ENCODE measurements at regions of chr20 and their contacts with region 1.

Region 1: GRCh38 chr20:2991532-2991931 is 51.9 kb upstream of the GNRH2 start:
- DNase-seq: no peak
- H3K4me3 ChIP-seq: no peak overlapping the region
- H3K27ac ChIP-seq: no peak overlapping the region
- H3K4me1 ChIP-seq: peaks cover 9% of the 10 kb centered on the region
- H3K27me3 ChIP-seq: no peaks in the 10 kb centered on the region
- CTCF ChIP-seq: no peak

Region 2: GRCh38 chr20:2742934-2743559 is 248.5 kb before region 1 on chr20:
- CTCF ChIA-PET with region 1: no interaction called
- POLR2A ChIA-PET with region 1: no interaction called
- intact Hi-C with region 1: loop called (anchors 10 kb)
- DNase-seq: peak; percentile 82
- H3K4me3 ChIP-seq: no peak overlapping the region
- H3K27ac ChIP-seq: no peak overlapping the region
- H3K4me1 ChIP-seq: no peaks in the 10 kb centered on the region
- H3K27me3 ChIP-seq: peaks cover 2% of the 10 kb centered on the region
- CTCF ChIP-seq: peak; percentile 98

Region 3: DNA sequence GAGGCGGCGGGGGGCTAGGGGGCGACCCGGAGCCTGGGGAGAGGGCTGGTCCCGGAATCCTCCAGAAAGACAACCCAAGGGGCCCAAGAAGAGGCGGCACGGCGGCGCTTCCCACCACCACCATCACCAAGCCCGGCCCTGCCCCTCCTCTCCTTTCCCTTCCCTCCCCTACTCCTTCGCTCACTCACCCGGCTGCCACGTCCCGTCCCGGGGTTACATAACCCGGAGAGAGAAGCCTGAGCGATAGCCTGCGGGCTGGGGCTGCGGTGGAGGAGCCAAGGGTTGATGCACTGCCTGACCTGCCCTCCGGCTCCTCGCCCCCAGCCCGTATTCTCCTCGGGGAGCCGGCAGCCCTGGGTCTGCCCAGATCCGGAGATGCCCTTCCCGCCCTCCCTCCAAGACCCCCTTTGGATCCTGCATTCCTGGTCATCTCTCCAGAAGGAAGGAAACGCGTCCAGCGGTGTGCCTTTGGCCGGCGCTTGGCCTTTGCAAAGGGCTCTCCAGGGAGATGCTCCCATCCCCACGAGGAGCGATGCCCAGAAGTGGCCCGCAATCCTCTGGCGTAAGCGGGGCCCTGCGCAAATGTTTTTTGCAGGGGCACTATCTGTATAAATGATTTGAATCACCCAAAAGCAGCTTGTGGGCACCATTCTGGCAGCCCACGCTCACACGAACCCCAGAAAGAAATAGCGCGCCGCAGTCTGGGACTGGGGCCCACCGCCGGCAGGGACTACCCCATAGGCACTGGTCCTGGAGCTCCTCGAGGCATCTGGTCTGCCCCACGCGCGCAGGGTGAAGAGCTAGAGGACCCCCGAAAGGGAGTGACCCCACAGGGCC is 186.5 kb before region 1 on chr20:
- CTCF ChIA-PET with region 1: no interaction called
- POLR2A ChIA-PET with region 1: no interaction called
- intact Hi-C with region 1: no loop called
- DNase-seq: no peak
- H3K4me3 ChIP-seq: no peak overlapping the region
- H3K27ac ChIP-seq: no peak overlapping the region
- H3K4me1 ChIP-seq: no peaks in the 10 kb centered on the region
- H3K27me3 ChIP-seq: peaks cover 58% of the 10 kb centered on the region
- CTCF ChIP-seq: no peak

Region 4: DNA sequence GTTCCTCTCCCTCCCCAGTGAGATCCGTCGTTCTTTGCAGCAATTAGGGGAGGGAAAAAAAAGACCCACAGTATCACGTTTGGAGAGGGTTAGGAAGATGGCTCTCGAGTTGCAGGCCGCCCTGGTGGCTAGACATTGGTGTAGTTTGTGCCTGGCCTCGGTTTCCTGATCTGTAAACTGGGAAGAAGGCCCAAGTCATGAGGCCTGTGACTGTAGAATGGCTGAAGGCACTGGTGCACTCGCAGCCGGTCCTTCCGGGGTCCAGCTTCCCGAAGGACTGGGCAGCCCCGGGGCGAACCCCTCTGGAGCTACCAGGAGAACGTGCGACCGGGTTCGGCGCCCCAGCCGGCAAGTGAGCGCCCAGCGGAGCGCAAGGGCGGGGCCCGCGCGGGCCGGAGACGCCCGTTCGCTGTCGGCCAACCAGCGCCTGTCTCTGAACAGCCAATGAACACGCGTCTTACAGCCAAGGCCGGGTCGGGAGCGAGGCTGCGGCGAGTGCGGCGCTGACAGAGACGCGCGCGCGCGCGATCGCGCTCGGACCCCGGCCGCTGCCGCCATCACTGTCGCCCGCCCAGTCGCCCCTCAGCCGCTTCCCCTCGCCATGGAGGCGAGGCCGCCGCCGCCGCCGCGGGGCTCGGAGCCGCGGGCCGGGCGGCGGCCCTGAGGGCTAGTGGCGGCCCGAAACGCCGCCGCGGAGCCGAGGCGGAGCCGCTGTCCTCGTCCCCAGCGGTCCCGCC is 118.4 kb before region 1 on chr20 and contains the start of gene PTPRA:
- CTCF ChIA-PET with region 1: no interaction called
- POLR2A ChIA-PET with region 1: interaction called, 7 read pairs
- intact Hi-C with region 1: loop called (anchors 5 kb)
- DNase-seq: peak; percentile 97
- H3K4me3 ChIP-seq: peak within 1 kb of the TSS; percentile 100
- H3K27ac ChIP-seq: peak within 1 kb of the TSS; percentile 85
- H3K4me1 ChIP-seq: peaks cover 32% of the 10 kb centered on the region
- H3K27me3 ChIP-seq: no peaks in the 10 kb centered on the region
- CTCF ChIP-seq: no peak
- total RNA-seq, gene PTPRA: 56.9 and 65.6 TPM in 2 replicates